ENCODE measurements at regions of chr9 and their contacts with region 1.

Region 1: DNA sequence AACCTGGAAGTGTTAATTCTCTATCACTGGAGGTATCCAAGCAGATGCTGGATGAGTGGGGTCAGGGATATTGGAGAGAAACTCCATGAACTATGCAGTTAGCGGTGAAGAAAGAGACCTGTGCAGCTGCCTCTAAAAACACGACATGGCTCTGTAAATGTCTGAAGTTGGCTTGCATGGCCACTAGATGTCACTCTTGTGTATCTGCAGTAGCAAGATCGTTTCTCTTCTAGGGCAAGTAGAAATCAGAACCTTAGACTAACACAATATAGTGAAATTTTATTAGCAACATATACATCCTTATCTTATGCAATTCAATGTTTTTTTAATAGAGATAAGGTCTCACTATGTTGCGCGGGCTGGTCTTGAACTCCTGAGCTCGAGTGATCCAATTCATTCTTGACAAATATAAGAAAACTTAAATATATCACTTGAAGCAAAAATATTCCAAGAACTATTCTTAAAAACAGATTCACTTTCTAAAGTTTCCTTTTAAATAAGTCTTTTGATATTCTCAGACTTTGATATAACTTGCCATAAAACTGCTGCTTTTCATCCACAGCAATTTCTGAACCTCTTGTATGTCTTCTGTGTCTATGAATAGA is 2.9 kb downstream of the OR2S2 start:
- DNase-seq: peak; percentile 65
- H3K4me3 ChIP-seq: no peak overlapping the region; a peak in 1 of 4 replicates
- H3K27ac ChIP-seq: no peak overlapping the region
- H3K4me1 ChIP-seq: peaks cover 0 to 9% of the 10 kb centered on the region in 2 experiments; a peak in 1 of 4 replicates
- H3K27me3 ChIP-seq: no peaks in the 10 kb centered on the region
- CTCF ChIP-seq: peak; percentile 88
- EP300 ChIP-seq: no peak
- RAD21 ChIP-seq: peak; percentile 84

Region 2: DNA sequence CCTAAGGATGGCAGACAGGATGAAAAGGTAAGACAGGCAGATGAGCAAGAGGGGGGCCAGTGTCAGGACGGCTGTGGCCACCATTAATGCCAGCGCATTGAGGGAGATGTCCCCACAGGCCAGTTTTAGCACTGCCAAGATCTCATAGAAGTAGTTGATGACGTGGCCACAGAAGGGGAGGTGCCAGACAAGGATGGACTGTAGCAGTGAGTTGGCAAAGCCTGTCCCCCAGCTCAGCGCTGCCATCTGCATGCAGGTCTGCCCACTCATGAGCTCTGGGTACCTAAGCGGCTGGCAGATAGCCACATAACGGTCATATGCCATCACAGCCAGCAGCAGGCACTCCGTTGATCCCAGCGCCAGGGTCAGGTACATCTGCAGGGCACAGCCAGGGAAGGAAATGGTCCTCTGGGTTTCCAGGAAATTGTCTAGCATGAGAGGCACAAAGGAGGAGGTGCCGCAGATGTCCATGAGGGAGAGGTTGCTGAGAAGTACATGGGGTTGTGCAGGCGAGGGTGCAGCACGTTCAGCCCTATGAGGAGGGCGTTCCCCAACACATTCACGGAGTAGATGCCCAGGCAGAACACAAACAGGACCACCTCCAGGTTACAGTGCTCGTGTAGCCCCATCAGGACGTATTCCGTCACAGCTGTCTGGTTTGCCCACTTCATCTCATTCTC is 95.6 kb before region 1 on chr9:
- CTCF ChIA-PET with region 1: no interaction called
- POLR2A ChIA-PET with region 1: no interaction called
- DNase-seq: peak; percentile 51
- H3K4me3 ChIP-seq: no peak overlapping the region
- H3K27ac ChIP-seq: no peak overlapping the region
- H3K4me1 ChIP-seq: peaks cover 0 to 9% of the 10 kb centered on the region in 2 experiments; a peak in 1 of 4 replicates
- H3K27me3 ChIP-seq: no peaks in the 10 kb centered on the region; the same call in 1 of the 2 replicates
- CTCF ChIP-seq: no peak
- EP300 ChIP-seq: no peak
- RAD21 ChIP-seq: no peak

Region 3: GRCh38 chr9:35923927-35924763 is 30.9 kb before region 1 on chr9:
- CTCF ChIA-PET with region 1: interaction called, 10 read pairs
- POLR2A ChIA-PET with region 1: no interaction called
- DNase-seq: no peak
- H3K4me3 ChIP-seq: peak overlapping the region in 1 of 2 experiments; percentile 41; a peak in 2 of 4 replicates
- H3K27ac ChIP-seq: peak overlapping the region; percentile 81 to 97; a peak in 3 of 4 replicates
- H3K4me1 ChIP-seq: peaks cover 0 to 24% of the 10 kb centered on the region in 2 experiments; a peak in 2 of 4 replicates
- H3K27me3 ChIP-seq: no peaks in the 10 kb centered on the region
- CTCF ChIP-seq: no peak
- EP300 ChIP-seq: peak in 1 of 2 experiments; percentile 67; a peak in 1 of 4 replicates
- RAD21 ChIP-seq: no peak

Region 4: GRCh38 chr9:35967042-35967441 is 12.0 kb after region 1 on chr9:
- CTCF ChIA-PET with region 1: interaction called, 12 read pairs
- POLR2A ChIA-PET with region 1: no interaction called
- DNase-seq: no peak
- H3K4me3 ChIP-seq: no peak overlapping the region
- H3K27ac ChIP-seq: no peak overlapping the region
- H3K4me1 ChIP-seq: 0 out of 4 replicates have a peak, but pooled peaks cover 0 to under 1% of the 10 kb centered on the region in 2 experiments
- H3K27me3 ChIP-seq: no peaks in the 10 kb centered on the region
- CTCF ChIP-seq: no peak
- EP300 ChIP-seq: no peak
- RAD21 ChIP-seq: no peak

Region 5: DNA sequence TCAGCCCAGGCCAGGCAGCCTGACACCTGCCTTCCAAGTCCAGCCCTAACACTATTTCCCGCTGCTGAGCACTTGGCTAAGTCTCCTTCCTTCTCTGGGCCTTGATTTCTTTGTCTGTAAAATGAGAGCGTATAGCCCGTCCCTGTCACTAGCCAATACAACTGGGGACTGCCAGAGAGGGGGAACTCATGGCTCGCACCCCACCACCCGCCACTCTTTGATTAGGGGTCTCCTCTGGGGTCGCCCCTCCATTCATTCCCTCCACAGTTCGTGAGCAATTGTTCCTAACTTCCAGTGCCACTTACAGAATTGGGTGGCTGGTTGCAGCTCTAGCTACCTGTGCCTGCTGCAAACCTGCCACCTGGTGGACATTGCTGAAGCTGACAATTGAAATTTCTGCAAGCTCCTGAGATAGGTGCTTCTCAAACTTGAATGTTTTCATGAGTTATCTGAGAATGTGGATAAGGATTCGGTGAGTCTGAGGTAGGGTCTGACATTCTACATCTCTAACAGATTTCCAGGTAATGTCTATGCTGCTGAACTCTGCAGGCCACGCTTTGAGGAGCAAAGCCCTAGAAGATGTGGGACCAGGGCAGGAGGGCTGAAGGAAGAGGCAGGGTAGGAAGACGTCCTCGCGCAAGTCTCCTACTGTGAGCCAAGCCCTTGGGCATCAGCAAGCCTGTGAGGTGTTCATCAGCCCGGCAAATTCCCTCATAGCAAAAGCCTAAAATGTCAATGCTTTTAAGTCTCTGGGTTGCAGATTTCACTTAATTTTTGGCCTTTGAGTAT is 68.4 kb after region 1 on chr9:
- CTCF ChIA-PET with region 1: interaction called, 88 read pairs
- POLR2A ChIA-PET with region 1: no interaction called
- DNase-seq: peak; percentile 68
- H3K4me3 ChIP-seq: no peak overlapping the region
- H3K27ac ChIP-seq: no peak overlapping the region
- H3K4me1 ChIP-seq: peaks cover 0 to 7% of the 10 kb centered on the region in 2 experiments; a peak in 2 of 4 replicates
- H3K27me3 ChIP-seq: no peaks in the 10 kb centered on the region
- CTCF ChIP-seq: peak; percentile 93
- EP300 ChIP-seq: no peak
- RAD21 ChIP-seq: peak; percentile 88

Measured in SK-N-SH (cell line).